GM12878 (cell line): ENCODE measurements at regions of chr20 and their contacts with region 1.

Region 1: DNA sequence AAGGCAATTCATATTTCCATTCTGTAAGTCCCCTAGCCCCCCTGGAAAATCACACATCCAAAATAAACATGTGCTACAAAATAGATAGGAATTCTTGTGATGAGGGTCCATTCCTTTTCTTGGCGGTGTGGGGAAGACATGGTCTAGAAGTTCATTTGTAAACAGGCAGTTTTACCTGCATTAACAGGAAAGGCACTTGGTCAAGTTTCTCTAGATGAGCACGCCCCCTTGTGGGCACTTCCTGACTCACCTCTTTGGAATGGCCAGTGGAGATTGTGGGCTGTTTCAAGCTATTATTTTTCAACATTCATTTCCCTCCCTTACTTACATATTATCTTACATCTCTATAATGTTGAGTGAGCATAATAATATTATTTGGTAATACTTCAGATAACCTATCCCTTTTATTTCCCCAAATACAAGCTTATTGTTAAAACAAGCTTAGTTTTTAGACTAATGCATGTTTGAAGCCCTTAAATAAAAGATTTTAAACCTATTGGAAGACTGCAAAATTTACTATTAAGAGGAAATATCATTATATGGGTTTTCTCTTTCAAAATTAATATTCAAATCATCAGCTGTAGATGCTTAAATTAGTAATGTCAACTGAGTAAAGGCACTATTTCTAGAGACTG is 92.1 kb downstream of the TASP1 start:
- DNase-seq: peak; percentile 17
- ATAC-seq: peak; percentile 95
- H3K4me3 ChIP-seq: no peak overlapping the region
- H3K27ac ChIP-seq: no peak overlapping the region
- H3K4me1 ChIP-seq: no peaks in the 10 kb centered on the region
- H3K27me3 ChIP-seq: no peaks in the 10 kb centered on the region
- CTCF ChIP-seq: peak; percentile 80 to 84 (median 81)
- EP300 ChIP-seq: no peak
- POLR2A ChIP-seq: no peak
- RAD21 ChIP-seq: peak; percentile 85

Region 2: GRCh38 chr20:12925214-12925755 is 621.3 kb before region 1 on chr20:
- CTCF ChIA-PET with region 1: interaction called, 24 read pairs
- POLR2A ChIA-PET with region 1: no interaction called
- RAD21 ChIA-PET with region 1: interaction called, 13 read pairs
- SMC1A ChIA-PET with region 1: interaction called, 19 read pairs
- in situ Hi-C with region 1: loop called (anchors 25 kb)
- intact Hi-C with region 1: loop called (anchors 1 kb)
- DNase-seq: peak; percentile 13
- ATAC-seq: peak; percentile 98
- H3K4me3 ChIP-seq: no peak overlapping the region
- H3K27ac ChIP-seq: no peak overlapping the region
- H3K4me1 ChIP-seq: no peaks in the 10 kb centered on the region
- H3K27me3 ChIP-seq: no peaks in the 10 kb centered on the region; a peak in 1 of 4 replicates
- CTCF ChIP-seq: peak; percentile 74 to 94 (median 84); a peak in 5 of 6 replicates
- EP300 ChIP-seq: no peak
- POLR2A ChIP-seq: no peak
- RAD21 ChIP-seq: peak; percentile 86

Region 3: DNA sequence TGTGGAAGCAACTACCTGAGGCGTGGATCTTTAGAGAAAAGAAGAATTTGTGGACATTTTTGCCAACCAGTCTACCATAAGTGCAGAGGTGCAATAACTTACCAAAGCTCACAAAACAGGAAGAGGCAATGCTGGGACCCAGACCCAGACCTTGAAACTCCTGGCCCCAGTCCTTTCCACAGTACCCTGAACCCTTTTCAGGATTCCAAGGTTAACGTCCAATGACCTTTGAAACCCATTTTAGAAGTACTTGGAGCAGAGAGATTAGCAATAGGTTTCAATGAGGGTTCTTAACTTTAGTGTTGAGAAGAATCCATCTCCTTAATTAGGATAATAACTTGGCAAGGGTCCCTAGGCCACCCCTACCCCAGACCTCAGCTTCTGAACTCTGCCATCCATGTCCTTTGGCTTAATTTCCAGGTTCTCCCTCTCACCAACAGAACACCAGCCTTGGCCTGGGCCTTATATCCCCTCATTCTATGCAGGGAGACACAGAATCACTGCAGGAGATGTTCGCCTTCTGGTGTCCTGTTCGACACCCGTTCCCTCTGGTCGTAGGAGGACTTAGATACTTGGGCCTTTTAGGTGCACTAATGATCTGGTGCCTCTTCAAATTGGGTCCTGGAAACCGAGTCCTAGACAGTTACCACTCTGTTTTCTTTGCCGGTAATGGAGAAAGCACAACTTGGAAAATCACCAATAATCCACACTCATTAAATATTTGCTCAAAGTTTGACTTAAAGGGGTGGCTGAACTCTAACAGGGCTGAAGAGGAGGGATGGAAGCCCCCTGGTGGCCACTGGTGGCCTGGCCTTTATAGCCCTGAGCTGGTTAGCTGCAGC is 284.9 kb before region 1 on chr20:
- CTCF ChIA-PET with region 1: interaction called, 19 read pairs
- POLR2A ChIA-PET with region 1: no interaction called
- RAD21 ChIA-PET with region 1: interaction called, 13 read pairs
- SMC1A ChIA-PET with region 1: interaction called, 10 read pairs
- in situ Hi-C with region 1: no loop called
- intact Hi-C with region 1: no loop called
- DNase-seq: no peak
- ATAC-seq: peak; percentile 94
- H3K4me3 ChIP-seq: no peak overlapping the region
- H3K27ac ChIP-seq: no peak overlapping the region
- H3K4me1 ChIP-seq: no peaks in the 10 kb centered on the region
- H3K27me3 ChIP-seq: no peaks in the 10 kb centered on the region
- CTCF ChIP-seq: peak; percentile 54 to 76 (median 75)
- EP300 ChIP-seq: no peak
- POLR2A ChIP-seq: no peak
- RAD21 ChIP-seq: peak; percentile 71

Region 4: GRCh38 chr20:13341781-13342277 is 204.8 kb before region 1 on chr20:
- CTCF ChIA-PET with region 1: interaction called, 21 read pairs
- POLR2A ChIA-PET with region 1: no interaction called
- RAD21 ChIA-PET with region 1: interaction called, 9 read pairs
- SMC1A ChIA-PET with region 1: interaction called, 19 read pairs
- in situ Hi-C with region 1: no loop called
- intact Hi-C with region 1: no loop called
- DNase-seq: no peak
- ATAC-seq: peak; percentile 35
- H3K4me3 ChIP-seq: no peak overlapping the region
- H3K27ac ChIP-seq: no peak overlapping the region
- H3K4me1 ChIP-seq: no peaks in the 10 kb centered on the region; the same call in 1 of the 2 replicates
- H3K27me3 ChIP-seq: no peaks in the 10 kb centered on the region
- CTCF ChIP-seq: no peak
- EP300 ChIP-seq: no peak
- POLR2A ChIP-seq: no peak
- RAD21 ChIP-seq: no peak

Region 5: GRCh38 chr20:13525225-13525940 is 21.2 kb before region 1 on chr20:
- CTCF ChIA-PET with region 1: interaction called, 15 read pairs
- POLR2A ChIA-PET with region 1: no interaction called
- RAD21 ChIA-PET with region 1: interaction called, 12 read pairs
- SMC1A ChIA-PET with region 1: interaction called, 3 read pairs
- in situ Hi-C with region 1: no loop called
- intact Hi-C with region 1: no loop called
- DNase-seq: no peak
- ATAC-seq: no peak
- H3K4me3 ChIP-seq: no peak overlapping the region
- H3K27ac ChIP-seq: no peak overlapping the region
- H3K4me1 ChIP-seq: no peaks in the 10 kb centered on the region
- H3K27me3 ChIP-seq: no peaks in the 10 kb centered on the region
- CTCF ChIP-seq: no peak
- EP300 ChIP-seq: no peak
- POLR2A ChIP-seq: no peak
- RAD21 ChIP-seq: no peak

Region 6: GRCh38 chr20:13703265-13703664 is 156.7 kb after region 1 on chr20:
- CTCF ChIA-PET with region 1: no interaction called
- POLR2A ChIA-PET with region 1: no interaction called
- RAD21 ChIA-PET with region 1: no interaction called
- SMC1A ChIA-PET with region 1: no interaction called
- in situ Hi-C with region 1: no loop called
- intact Hi-C with region 1: no loop called
- DNase-seq: no peak
- ATAC-seq: no peak
- H3K4me3 ChIP-seq: no peak overlapping the region
- H3K27ac ChIP-seq: no peak overlapping the region
- H3K4me1 ChIP-seq: no peaks in the 10 kb centered on the region
- H3K27me3 ChIP-seq: no peaks in the 10 kb centered on the region
- CTCF ChIP-seq: no peak
- EP300 ChIP-seq: no peak
- POLR2A ChIP-seq: no peak
- RAD21 ChIP-seq: no peak

Region 7: DNA sequence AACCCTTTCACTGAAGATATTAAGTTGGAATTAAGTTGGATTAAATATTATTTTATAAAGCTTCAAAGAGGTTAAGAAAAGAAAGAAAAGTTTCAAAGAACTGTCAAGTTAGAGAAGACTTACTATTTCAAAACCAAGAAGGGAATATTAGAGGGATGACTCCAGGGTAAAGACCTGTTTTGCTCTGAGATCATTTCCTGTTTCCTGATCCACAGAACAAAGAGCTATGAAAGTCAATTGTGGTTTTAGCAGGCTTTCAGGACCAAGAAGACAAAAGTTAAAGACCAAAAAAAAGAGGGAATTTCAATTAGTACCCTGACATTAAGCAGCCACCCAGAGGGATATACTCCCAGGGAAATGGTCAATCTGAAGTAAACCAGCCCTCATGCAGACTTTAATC is 218.7 kb after region 1 on chr20:
- CTCF ChIA-PET with region 1: interaction called, 93 read pairs
- POLR2A ChIA-PET with region 1: no interaction called
- RAD21 ChIA-PET with region 1: interaction called, 57 read pairs
- SMC1A ChIA-PET with region 1: interaction called, 50 read pairs
- in situ Hi-C with region 1: no loop called
- intact Hi-C with region 1: no loop called
- DNase-seq: no peak
- ATAC-seq: no peak
- H3K4me3 ChIP-seq: no peak overlapping the region
- H3K27ac ChIP-seq: no peak overlapping the region
- H3K4me1 ChIP-seq: no peaks in the 10 kb centered on the region
- H3K27me3 ChIP-seq: no peaks in the 10 kb centered on the region
- CTCF ChIP-seq: no peak
- EP300 ChIP-seq: no peak
- POLR2A ChIP-seq: no peak
- RAD21 ChIP-seq: no peak